CD4-positive, alpha-beta memory T cell (primary cell): ENCODE measurements at regions of chr2 and their contacts with region 1.

Region 1: DNA sequence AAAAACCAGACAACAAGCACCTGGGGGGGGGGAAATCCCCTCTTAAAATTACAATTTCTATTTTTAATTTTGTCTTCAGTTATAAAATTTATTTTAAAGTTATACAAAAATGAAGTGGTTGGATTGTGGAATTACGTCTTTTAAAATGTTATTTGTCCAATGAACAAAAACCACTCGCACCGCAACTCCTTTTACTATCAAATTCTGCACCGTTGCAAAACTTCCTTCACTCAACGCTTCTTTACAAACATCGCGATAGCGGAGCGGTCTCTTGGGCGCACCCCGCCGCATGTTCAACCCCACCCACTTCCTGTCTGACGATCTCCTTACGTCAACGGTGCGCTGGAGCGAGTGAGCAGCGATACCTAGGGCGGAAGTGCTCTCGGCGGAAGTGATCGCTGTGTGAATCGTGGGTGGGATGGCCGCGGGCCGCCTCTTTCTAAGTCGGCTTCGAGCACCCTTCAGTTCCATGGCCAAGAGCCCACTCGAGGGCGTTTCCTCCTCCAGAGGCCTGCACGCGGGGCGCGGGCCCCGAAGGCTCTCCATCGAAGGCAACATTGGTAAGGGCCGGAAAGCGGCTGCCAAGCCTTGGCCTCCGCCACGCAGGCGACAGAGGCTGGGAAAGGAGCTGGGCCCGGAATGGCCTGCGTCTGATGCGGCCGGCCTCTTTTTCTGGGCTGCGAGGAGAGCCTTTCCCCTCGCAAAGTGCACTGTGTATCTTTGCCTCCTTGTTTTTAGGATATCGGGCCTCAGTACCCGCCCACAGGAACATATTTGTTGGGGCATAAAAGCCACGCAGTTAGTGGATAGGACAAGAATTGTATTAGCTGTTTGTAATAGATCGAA is at the start of gene DGUOK:
- DNase-seq: peak; percentile 96 to 99 (median 98)
- H3K4me3 ChIP-seq: peak within 1 kb of the TSS; percentile 66 to 72
- H3K4me3 Mint-ChIP-seq: peak within 1 kb of the TSS; percentile 77 to 95 (median 92)
- H3K27ac ChIP-seq: peak within 1 kb of the TSS; percentile 97
- H3K27ac Mint-ChIP-seq: peak within 1 kb of the TSS; percentile 98 to 99 (median 99)
- H3K4me1 ChIP-seq: peaks cover 50% of the 10 kb centered on the region
- H3K4me1 Mint-ChIP-seq: peaks cover 38 to 55% (median 45%) of the 10 kb centered on the region in 4 donors
- H3K27me3 ChIP-seq: no peaks in the 10 kb centered on the region
- H3K27me3 Mint-ChIP-seq: no peaks in the 10 kb centered on the region
- total RNA-seq, gene DGUOK: 52.2 to 55.5 TPM

Region 2: GRCh38 chr2:73736855-73737779 is 189.6 kb before region 1 on chr2 and contains the start of gene TPRKB:
- CTCF ChIA-PET with region 1: no interaction called
- POLR2A ChIA-PET with region 1: no interaction called
- intact Hi-C with region 1: loop called (anchors 1 kb)
- DNase-seq: peak; percentile 93 to 95 (median 94)
- H3K4me3 ChIP-seq: peak within 1 kb of the TSS; percentile 43 to 74
- H3K4me3 Mint-ChIP-seq: peak within 1 kb of the TSS; percentile 90 to 98 (median 95)
- H3K27ac ChIP-seq: peak within 1 kb of the TSS; percentile 68
- H3K27ac Mint-ChIP-seq: peak within 1 kb of the TSS; percentile 85 to 96 (median 93)
- H3K4me1 ChIP-seq: peaks cover 24% of the 10 kb centered on the region
- H3K4me1 Mint-ChIP-seq: peaks cover 15 to 25% (median 19%) of the 10 kb centered on the region in 4 donors
- H3K27me3 ChIP-seq: no peaks in the 10 kb centered on the region
- H3K27me3 Mint-ChIP-seq: no peaks in the 10 kb centered on the region
- total RNA-seq, gene TPRKB: 31.7 to 33.0 TPM

Region 3: DNA sequence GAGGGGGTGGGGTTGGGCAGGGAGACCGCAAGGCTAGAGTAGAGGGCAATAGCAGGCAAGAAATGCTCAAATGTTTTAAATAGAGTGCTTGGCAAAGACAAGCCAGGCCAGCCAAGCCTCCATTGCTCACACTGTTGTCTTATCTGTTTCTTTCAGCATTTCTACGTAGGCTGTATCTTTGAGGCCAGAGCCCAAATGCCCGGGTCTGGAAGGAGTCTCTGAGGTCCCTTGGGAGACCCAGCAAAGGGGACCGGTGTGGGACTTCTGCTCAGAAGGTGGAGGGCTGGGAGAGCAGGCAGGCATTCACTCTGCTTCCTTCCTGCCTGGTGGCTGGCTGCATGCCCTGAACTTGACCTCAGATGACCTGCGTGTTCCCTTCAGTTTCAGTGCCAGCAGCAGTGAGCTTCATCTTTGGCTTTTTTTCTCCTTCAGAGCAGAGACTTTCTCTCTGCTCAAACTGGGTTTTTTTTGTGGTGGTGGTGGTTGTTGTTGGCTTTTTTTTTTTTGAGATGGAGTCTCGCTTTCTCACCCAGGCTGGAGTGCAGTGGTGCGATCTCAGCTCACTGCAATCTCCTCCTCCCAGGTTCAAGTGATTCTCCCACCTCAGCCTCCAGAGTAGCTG is 44.2 kb after region 1 on chr2:
- CTCF ChIA-PET with region 1: interaction called, 4 read pairs
- POLR2A ChIA-PET with region 1: interaction called, 14 read pairs
- intact Hi-C with region 1: loop called (anchors 1 kb)
- DNase-seq: peak; percentile 69 to 74 (median 71)
- H3K4me3 ChIP-seq: peak overlapping the region; percentile 32 to 33
- H3K4me3 Mint-ChIP-seq: peak overlapping the region; percentile 64 to 84 (median 74)
- H3K27ac ChIP-seq: peak overlapping the region; percentile 17
- H3K27ac Mint-ChIP-seq: peak overlapping the region; percentile 81 to 96 (median 91)
- H3K4me1 ChIP-seq: peaks cover 28% of the 10 kb centered on the region
- H3K4me1 Mint-ChIP-seq: peaks cover 26 to 55% (median 40%) of the 10 kb centered on the region in 4 donors
- H3K27me3 ChIP-seq: no peaks in the 10 kb centered on the region
- H3K27me3 Mint-ChIP-seq: no peaks in the 10 kb centered on the region

Region 4: DNA sequence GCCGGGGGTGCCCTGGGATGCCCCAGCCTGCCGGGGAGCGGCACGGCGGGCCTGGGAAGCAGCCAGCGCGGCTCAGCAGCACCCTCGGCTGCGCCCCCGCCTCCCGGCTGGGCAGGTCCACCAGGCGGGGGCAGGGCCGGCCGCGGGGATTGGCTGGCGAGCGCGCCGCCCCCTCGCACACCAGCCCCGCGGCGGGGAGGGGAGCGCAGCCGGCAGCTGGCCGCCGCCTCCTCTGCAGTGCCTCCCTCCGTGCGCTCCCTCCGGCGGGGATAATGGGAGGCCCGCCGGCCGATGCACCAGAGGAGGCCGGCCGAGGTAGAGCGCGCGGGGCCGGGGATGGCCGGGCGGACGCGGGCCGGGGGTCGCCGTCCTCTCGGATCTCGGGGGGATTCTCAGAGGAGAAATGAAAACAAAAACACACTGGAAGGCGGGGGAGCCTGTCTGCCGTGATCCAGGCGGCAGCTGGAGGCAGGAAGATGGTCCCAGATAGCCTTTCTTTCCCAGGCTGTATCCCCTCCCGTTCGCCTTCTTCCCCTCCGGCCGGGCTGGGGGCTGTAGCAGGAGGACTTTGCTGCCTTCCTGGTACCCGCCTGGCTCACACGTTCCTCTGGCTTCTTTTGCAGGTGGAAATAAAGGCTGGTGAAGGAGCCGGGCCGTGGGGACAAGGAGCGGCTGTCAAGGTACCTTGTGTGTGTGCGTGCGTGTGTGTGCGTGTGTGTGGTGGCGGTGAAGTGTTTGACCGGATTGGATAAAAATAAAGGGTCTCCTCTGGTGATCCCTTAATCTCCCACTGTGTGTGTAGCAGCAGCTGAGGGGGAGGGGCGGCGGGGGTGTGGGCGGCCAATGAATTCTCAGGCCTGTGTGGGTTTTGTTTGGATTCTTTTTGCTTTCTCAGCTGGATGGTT is 76.0 kb after region 1 on chr2:
- CTCF ChIA-PET with region 1: no interaction called
- POLR2A ChIA-PET with region 1: interaction called, 9 read pairs
- intact Hi-C with region 1: loop called (anchors 1 kb)
- DNase-seq: peak; percentile 80 to 85 (median 83)
- H3K4me3 ChIP-seq: peak overlapping the region; percentile 9 to 49
- H3K4me3 Mint-ChIP-seq: peak overlapping the region; percentile 77 to 88 (median 84)
- H3K27ac ChIP-seq: peak overlapping the region; percentile 57
- H3K27ac Mint-ChIP-seq: peak overlapping the region; percentile 2 to 89 (median 85)
- H3K4me1 ChIP-seq: peaks cover 44% of the 10 kb centered on the region
- H3K4me1 Mint-ChIP-seq: peaks cover 32 to 77% (median 47%) of the 10 kb centered on the region in 4 donors
- H3K27me3 ChIP-seq: no peaks in the 10 kb centered on the region
- H3K27me3 Mint-ChIP-seq: no peaks in the 10 kb centered on the region

Region 5: DNA sequence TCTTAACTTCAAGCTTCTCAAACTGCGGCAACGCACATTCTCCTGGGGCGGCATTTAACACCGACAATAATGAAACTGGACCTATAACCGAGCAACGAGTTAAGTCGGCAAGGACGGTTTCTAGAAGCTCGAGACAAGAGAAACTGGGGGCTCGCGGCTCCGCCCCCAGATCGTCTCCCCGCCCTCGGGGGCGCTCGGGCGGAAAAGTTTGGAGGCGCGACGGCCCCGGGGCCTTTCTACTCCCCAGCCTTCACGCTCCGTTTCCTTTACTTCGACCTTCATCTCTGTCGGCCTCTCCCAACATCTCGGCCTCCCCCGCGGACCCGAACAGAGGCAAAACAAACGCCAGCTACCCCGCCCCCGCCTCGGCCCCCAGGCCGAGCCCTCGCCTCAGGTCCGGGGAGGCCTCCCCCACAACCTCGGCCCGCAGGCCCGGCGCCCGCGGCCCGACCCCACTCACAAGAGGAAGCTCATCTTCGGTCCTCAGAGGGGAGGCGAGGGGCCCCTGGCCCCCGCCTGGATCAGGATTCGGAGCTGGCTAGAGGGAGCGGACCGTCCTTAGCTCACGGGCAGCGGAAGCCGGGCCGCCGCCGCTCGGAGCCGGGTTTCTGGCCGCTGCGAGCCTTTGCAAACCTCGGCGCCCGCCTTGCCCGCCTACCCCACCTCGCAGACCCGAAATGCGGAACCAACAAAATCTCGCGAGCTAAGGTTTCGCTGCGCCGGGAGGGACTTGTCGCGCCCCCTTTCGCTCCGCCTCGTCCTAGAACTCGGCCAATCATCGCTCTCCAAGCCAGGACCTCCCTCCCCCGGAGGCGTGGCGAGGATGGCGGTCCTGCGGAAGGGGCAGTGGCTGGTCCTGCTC is 251.7 kb after region 1 on chr2 and contains the start of gene MOB1A:
- CTCF ChIA-PET with region 1: no interaction called
- POLR2A ChIA-PET with region 1: interaction called, 11 read pairs
- intact Hi-C with region 1: loop called (anchors 1 kb)
- DNase-seq: peak; percentile 97 to 99 (median 98)
- H3K4me3 ChIP-seq: peak within 1 kb of the TSS; percentile 69 to 74
- H3K4me3 Mint-ChIP-seq: peak within 1 kb of the TSS; percentile 90 to 94 (median 94)
- H3K27ac ChIP-seq: peak within 1 kb of the TSS; percentile 99
- H3K27ac Mint-ChIP-seq: peak within 1 kb of the TSS; percentile 89 to 96 (median 95)
- H3K4me1 ChIP-seq: peaks cover 47% of the 10 kb centered on the region
- H3K4me1 Mint-ChIP-seq: peaks cover 22 to 48% (median 35%) of the 10 kb centered on the region in 4 donors
- H3K27me3 ChIP-seq: no peaks in the 10 kb centered on the region
- H3K27me3 Mint-ChIP-seq: no peaks in the 10 kb centered on the region
- total RNA-seq, gene MOB1A: 135 TPM